CD4-positive, alpha-beta T cell (primary cell): ENCODE measurements at regions of chr10 and their contacts with region 1.

Region 1: GRCh38 chr10:16817125-16818019 is at the start of gene RSU1:
- DNase-seq: peak; percentile 99 to 100 (median 100)
- ATAC-seq: peak; percentile 96
- H3K4me3 ChIP-seq: peak within 1 kb of the TSS; percentile 78
- H3K4me3 Mint-ChIP-seq: peak within 1 kb of the TSS; percentile 97
- H3K27ac ChIP-seq: peak within 1 kb of the TSS; percentile 82 to 87
- H3K27ac Mint-ChIP-seq: peak within 1 kb of the TSS; percentile 92
- H3K4me1 ChIP-seq: peaks cover 32% of the 10 kb centered on the region
- H3K4me1 Mint-ChIP-seq: peaks cover 50% of the 10 kb centered on the region
- H3K27me3 ChIP-seq: no peaks in the 10 kb centered on the region
- H3K27me3 Mint-ChIP-seq: no peaks in the 10 kb centered on the region
- CTCF ChIP-seq: no peak
- total RNA-seq, gene RSU1: 26.2 to 28.8 TPM

Region 2: DNA sequence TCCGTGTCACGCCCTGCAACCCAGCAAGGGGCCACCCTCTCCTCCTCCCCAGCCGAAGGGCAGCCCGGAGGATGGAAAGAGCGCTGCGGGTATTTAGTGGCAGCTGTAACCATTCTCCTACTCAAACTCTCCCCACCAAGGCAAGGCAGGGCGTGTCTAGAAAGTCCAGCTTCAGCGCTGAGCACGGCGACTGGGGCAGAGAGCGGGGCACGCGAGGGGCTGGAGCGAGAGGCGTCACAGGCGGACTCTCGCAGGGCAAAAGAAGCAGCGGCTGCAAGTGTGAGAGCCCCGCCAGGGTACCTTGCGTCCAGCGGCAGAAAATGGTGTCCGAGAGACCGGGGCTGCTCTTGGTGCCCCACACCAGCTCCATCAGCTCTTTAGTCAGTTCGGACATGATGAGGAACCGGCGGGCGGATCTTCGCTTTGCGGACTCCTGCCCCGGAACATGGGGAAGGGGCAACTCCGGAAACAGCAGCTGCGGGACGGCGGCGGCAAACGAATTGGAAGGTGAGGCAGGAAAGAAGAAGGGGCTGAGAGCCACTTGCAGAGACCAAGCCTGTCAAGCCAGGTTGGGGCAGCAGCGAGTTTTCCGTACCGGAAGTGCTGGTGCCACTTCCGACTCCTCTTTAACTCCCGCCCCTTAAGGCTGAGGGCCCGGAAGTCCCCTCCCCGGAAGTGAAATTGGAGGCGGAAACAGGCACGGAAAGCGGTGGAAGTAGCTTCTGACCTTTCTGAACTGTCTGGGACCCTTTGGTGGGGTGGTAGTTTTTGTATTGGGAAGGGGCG is 957.3 kb before region 1 on chr10 and contains the start of gene MINDY3:
- CTCF ChIA-PET with region 1: no interaction called
- POLR2A ChIA-PET with region 1: interaction called, 10 read pairs
- intact Hi-C with region 1: loop called in 1 of 2 experiments (anchors 5 kb)
- DNase-seq: peak; percentile 65 to 92 (median 76)
- ATAC-seq: peak; percentile 95
- H3K4me3 ChIP-seq: peak within 1 kb of the TSS; percentile 83
- H3K4me3 Mint-ChIP-seq: peak within 1 kb of the TSS; percentile 98
- H3K27ac ChIP-seq: peak within 1 kb of the TSS in 1 of 2 donors; percentile 56
- H3K27ac Mint-ChIP-seq: peak within 1 kb of the TSS; percentile 89
- H3K4me1 ChIP-seq: peaks cover 10% of the 10 kb centered on the region
- H3K4me1 Mint-ChIP-seq: peaks cover 52% of the 10 kb centered on the region
- H3K27me3 ChIP-seq: peaks cover 0 to 17% of the 10 kb centered on the region in 2 experiments
- H3K27me3 Mint-ChIP-seq: peaks cover 19% of the 10 kb centered on the region
- CTCF ChIP-seq: no peak
- total RNA-seq, gene MINDY3: 39.8 to 40.6 TPM

Region 3: GRCh38 chr10:16632996-16633395 is 184.4 kb before region 1 on chr10:
- CTCF ChIA-PET with region 1: no interaction called
- POLR2A ChIA-PET with region 1: no interaction called
- intact Hi-C with region 1: no loop called
- DNase-seq: no peak
- ATAC-seq: no peak
- H3K4me3 ChIP-seq: no peak overlapping the region
- H3K4me3 Mint-ChIP-seq: no peak overlapping the region
- H3K27ac ChIP-seq: no peak overlapping the region
- H3K27ac Mint-ChIP-seq: no peak overlapping the region
- H3K4me1 ChIP-seq: no peaks in the 10 kb centered on the region
- H3K4me1 Mint-ChIP-seq: no peaks in the 10 kb centered on the region
- H3K27me3 ChIP-seq: no peaks in the 10 kb centered on the region
- H3K27me3 Mint-ChIP-seq: no peaks in the 10 kb centered on the region
- CTCF ChIP-seq: no peak

Region 4: DNA sequence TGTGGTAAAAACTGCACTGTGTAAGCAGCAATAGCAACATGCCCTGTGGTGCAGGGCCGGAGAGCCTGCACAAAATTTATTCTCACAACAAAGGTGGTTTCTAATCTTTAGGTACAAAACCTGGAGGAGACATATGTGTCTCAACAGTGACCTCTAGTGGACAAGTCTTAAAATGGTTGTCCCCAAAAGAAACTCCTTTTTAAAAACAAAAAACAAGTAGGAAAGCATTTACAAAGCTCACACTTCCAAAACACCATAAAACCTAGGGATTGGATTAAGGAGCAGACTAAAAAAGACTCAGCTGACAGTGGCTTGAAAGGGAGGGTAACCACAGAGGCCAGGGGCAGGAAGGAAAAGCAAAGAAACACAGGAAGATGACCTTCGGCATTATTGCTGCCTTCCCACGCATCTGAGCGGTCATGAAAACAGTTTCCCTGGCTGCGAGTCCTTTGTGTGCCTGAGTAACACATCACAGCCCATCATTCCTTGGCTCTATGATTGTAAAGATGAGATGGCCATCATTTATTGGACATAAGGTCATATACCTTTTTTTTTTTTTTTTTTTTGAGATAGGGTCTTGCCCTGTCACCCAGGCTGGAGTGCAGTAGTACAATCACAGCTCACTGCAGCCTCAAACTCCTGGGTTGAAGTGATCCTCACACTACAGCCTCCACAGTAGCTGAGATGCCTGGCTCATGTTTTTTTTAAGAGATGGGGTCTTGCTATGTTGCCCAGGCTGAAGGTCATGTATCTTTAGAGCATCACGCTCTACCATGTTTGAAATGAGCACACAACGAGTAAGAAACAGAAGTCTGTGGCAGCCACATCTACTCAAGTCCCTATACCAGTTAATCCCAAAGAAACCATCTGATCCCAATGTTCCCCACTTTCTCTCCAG is 39.6 kb before region 1 on chr10:
- CTCF ChIA-PET with region 1: interaction called, 3 read pairs
- POLR2A ChIA-PET with region 1: interaction called, 17 read pairs
- intact Hi-C with region 1: no loop called
- DNase-seq: peak in 5 of 14 experiments; percentile 6 to 83 (median 65)
- ATAC-seq: peak; percentile 75
- H3K4me3 ChIP-seq: no peak overlapping the region
- H3K4me3 Mint-ChIP-seq: peak overlapping the region; percentile 32
- H3K27ac ChIP-seq: no peak overlapping the region
- H3K27ac Mint-ChIP-seq: peak overlapping the region; percentile 81
- H3K4me1 ChIP-seq: peaks cover 20% of the 10 kb centered on the region
- H3K4me1 Mint-ChIP-seq: peaks cover 39% of the 10 kb centered on the region
- H3K27me3 ChIP-seq: no peaks in the 10 kb centered on the region
- H3K27me3 Mint-ChIP-seq: no peaks in the 10 kb centered on the region
- CTCF ChIP-seq: peak; percentile 89

Region 5: DNA sequence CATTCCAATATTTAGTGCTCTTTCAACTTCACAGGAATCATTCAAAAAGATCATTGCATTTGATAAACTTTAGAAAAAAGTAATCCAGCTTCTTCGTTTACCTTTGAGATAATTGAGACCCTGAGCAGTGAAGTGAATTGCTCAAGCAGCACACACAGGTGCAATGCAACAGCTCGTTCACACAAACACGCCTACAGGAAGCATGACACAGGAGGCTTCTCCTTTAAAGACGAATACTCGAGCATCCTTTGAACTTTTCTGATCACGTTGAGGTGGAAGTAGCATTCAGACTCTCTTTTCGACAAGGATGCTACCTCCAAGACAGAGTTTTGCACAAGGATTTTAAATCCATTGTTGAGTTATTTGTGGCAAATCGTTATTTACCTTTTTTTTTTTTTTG is 17.9 kb after region 1 on chr10:
- CTCF ChIA-PET with region 1: no interaction called
- POLR2A ChIA-PET with region 1: interaction called, 27 read pairs
- intact Hi-C with region 1: no loop called
- DNase-seq: peak in 11 of 14 experiments; percentile 23 to 75 (median 39)
- ATAC-seq: peak; percentile 100
- H3K4me3 ChIP-seq: peak overlapping the region; percentile 29
- H3K4me3 Mint-ChIP-seq: peak overlapping the region; percentile 26
- H3K27ac ChIP-seq: no peak overlapping the region
- H3K27ac Mint-ChIP-seq: peak overlapping the region; percentile 43
- H3K4me1 ChIP-seq: peaks cover 6% of the 10 kb centered on the region
- H3K4me1 Mint-ChIP-seq: peaks cover 10% of the 10 kb centered on the region
- H3K27me3 ChIP-seq: no peaks in the 10 kb centered on the region
- H3K27me3 Mint-ChIP-seq: no peaks in the 10 kb centered on the region
- CTCF ChIP-seq: no peak

Region 6: DNA sequence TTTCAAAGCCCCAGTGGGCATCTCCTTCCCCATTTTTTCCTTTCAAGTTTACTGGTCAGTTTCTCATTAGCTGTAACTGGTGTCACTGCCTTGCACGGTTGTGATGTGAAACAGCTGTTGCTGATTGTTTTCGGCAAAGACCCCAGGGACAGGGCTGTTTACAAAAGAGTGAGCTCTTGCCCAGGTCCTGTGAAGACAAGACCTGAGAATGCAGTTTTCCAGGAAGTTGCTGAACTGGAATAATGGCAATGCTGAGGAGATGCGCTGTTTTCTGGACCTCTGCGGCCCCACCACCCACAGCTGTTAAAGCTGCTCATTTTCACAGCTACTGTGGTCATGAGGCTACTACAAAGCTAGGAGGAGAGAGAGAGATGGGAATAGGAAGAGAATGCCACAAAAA is 116.4 kb after region 1 on chr10:
- CTCF ChIA-PET with region 1: no interaction called
- POLR2A ChIA-PET with region 1: no interaction called
- intact Hi-C with region 1: no loop called
- DNase-seq: no peak
- ATAC-seq: no peak
- H3K4me3 ChIP-seq: no peak overlapping the region
- H3K4me3 Mint-ChIP-seq: no peak overlapping the region
- H3K27ac ChIP-seq: no peak overlapping the region
- H3K27ac Mint-ChIP-seq: no peak overlapping the region
- H3K4me1 ChIP-seq: no peaks in the 10 kb centered on the region
- H3K4me1 Mint-ChIP-seq: no peaks in the 10 kb centered on the region
- H3K27me3 ChIP-seq: no peaks in the 10 kb centered on the region
- H3K27me3 Mint-ChIP-seq: no peaks in the 10 kb centered on the region
- CTCF ChIP-seq: no peak

Region 7: GRCh38 chr10:16965740-16966447 is 148.5 kb after region 1 on chr10:
- CTCF ChIA-PET with region 1: no interaction called
- POLR2A ChIA-PET with region 1: no interaction called
- intact Hi-C with region 1: no loop called
- DNase-seq: no peak
- ATAC-seq: no peak
- H3K4me3 ChIP-seq: no peak overlapping the region
- H3K4me3 Mint-ChIP-seq: no peak overlapping the region
- H3K27ac ChIP-seq: no peak overlapping the region
- H3K27ac Mint-ChIP-seq: no peak overlapping the region
- H3K4me1 ChIP-seq: peaks cover 6% of the 10 kb centered on the region
- H3K4me1 Mint-ChIP-seq: peaks cover 20% of the 10 kb centered on the region
- H3K27me3 ChIP-seq: no peaks in the 10 kb centered on the region
- H3K27me3 Mint-ChIP-seq: no peaks in the 10 kb centered on the region
- CTCF ChIP-seq: no peak

Region 8: DNA sequence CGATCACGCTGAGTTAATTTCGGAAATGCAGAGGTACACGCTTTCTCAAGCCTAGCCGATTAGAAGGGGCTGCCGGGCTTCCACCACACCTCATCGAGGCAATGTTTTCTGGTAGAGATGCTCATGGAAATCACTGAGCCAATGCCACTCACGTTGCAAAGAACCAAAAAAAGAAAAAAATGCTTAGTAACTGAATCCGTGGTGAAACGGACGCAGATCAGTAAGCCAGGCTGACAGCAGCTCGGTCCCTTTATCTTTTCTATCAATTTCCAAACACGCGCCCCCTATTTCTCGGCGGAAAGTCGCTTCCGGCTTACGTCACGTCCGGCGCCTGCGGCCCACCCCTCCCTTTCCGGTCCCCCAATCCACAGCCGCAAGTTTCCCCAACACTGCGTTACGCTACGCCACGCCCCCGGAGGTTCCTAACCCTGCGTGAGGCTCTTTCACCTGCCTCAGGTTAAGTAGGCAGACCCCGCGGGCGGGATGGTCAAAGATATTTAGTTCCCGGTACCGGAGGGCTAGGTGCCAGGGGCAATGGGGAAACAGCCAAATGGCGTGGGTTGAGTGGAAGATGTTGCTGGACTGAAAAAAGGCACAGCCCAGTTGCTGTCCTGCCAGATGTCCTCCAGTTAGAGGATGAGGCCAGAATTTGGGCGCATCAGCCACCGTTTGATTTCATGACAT is 1834.1 kb after region 1 on chr10 and contains the start of gene NSUN6:
- CTCF ChIA-PET with region 1: interaction called, 3 read pairs
- POLR2A ChIA-PET with region 1: interaction called, 3 read pairs
- intact Hi-C with region 1: loop called in 1 of 2 experiments (anchors 5 kb)
- DNase-seq: peak; percentile 88 to 97 (median 92)
- ATAC-seq: peak; percentile 94
- H3K4me3 ChIP-seq: peak within 1 kb of the TSS; percentile 68
- H3K4me3 Mint-ChIP-seq: peak within 1 kb of the TSS; percentile 98
- H3K27ac ChIP-seq: peak within 1 kb of the TSS; percentile 92 to 97
- H3K27ac Mint-ChIP-seq: peak within 1 kb of the TSS; percentile 97
- H3K4me1 ChIP-seq: peaks cover 15% of the 10 kb centered on the region
- H3K4me1 Mint-ChIP-seq: peaks cover 45% of the 10 kb centered on the region
- H3K27me3 ChIP-seq: no peaks in the 10 kb centered on the region
- H3K27me3 Mint-ChIP-seq: no peaks in the 10 kb centered on the region
- CTCF ChIP-seq: no peak
- total RNA-seq, gene NSUN6: 22.9 to 27.2 TPM